ENCODE measurements at regions of chr11 and their contacts with region 1.

Region 1: DNA sequence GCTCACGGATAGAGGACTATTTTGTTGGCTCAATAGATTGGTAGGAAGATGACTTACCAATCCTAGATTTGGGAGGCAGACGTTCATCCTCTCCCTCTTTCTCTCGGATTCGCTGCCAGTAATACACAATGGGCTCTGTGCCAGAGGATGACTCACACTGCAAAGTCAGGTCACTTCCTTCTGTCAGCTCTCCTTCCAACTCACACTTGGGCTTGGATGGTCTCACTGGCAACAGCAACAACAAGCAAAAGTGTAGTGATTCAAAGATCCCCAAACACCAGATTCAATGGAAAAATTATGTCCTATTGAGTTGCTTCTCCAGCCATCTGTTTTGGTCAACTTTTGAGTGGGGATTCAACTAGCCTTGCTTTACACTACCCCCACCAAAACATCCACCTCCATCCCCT is 21.7 kb upstream of the HSPA8 start:
- H3K4me3 ChIP-seq: no peak overlapping the region
- H3K27ac ChIP-seq: no peak overlapping the region
- H3K4me1 ChIP-seq: no peaks in the 10 kb centered on the region
- CTCF ChIP-seq: no peak

Region 2: GRCh38 chr11:123054301-123055065 is 29.1 kb before region 1 on chr11:
- CTCF ChIA-PET with region 1: interaction called, 5 read pairs
- POLR2A ChIA-PET with region 1: interaction called, 11 read pairs
- H3K4me3 ChIP-seq: no peak overlapping the region
- H3K27ac ChIP-seq: no peak overlapping the region
- H3K4me1 ChIP-seq: no peaks in the 10 kb centered on the region
- CTCF ChIP-seq: peak; percentile 19; the same call in 1 of the 2 replicates

Region 3: DNA sequence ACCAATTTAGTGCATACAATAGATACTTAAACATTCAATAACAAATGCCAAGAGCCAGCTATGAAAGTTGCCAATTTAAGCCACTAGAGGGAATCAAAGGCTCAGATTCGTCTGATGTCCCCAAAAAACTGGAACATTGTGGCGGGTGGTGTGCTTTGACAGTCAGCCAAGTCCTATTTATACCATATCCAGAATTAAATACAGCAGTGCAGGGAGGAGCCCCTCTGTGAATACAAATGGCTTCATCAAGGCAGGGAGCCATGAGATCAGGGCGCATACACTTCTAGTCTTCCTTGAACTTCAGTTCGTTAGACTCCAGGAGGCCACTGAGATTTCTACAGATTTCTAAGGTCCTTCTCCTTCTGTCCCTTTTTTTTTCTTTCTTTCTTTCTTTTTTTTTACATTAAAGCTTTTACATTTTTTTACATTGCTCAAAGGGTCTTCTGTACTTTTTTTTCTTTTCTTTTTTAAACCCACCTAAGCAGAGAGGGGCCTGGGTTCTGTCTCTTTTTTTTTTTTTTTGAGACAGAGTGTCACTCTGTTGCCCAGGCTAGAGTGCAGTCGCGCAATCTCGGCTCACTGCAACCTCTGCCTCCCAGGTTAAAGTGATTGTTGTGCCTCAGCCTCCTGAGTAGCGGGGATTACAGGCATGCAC is 19.8 kb after region 1 on chr11:
- CTCF ChIA-PET with region 1: interaction called, 13 read pairs
- POLR2A ChIA-PET with region 1: interaction called, 3 read pairs
- H3K4me3 ChIP-seq: no peak overlapping the region
- H3K27ac ChIP-seq: no peak overlapping the region
- H3K4me1 ChIP-seq: 0 out of 2 replicates have a peak, but pooled peaks cover 3% of the 10 kb centered on the region
- CTCF ChIP-seq: no peak; the same call in 1 of the 2 replicates

Region 4: GRCh38 chr11:123122341-123122740 is 38.7 kb after region 1 on chr11:
- CTCF ChIA-PET with region 1: no interaction called
- POLR2A ChIA-PET with region 1: interaction called, 10 read pairs
- H3K4me3 ChIP-seq: no peak overlapping the region
- H3K27ac ChIP-seq: no peak overlapping the region
- H3K4me1 ChIP-seq: no peaks in the 10 kb centered on the region
- CTCF ChIP-seq: no peak

Measured in HEK293 (cell line).